ENCODE measurements at regions of chr12 and their contacts with region 1.

Region 1: DNA sequence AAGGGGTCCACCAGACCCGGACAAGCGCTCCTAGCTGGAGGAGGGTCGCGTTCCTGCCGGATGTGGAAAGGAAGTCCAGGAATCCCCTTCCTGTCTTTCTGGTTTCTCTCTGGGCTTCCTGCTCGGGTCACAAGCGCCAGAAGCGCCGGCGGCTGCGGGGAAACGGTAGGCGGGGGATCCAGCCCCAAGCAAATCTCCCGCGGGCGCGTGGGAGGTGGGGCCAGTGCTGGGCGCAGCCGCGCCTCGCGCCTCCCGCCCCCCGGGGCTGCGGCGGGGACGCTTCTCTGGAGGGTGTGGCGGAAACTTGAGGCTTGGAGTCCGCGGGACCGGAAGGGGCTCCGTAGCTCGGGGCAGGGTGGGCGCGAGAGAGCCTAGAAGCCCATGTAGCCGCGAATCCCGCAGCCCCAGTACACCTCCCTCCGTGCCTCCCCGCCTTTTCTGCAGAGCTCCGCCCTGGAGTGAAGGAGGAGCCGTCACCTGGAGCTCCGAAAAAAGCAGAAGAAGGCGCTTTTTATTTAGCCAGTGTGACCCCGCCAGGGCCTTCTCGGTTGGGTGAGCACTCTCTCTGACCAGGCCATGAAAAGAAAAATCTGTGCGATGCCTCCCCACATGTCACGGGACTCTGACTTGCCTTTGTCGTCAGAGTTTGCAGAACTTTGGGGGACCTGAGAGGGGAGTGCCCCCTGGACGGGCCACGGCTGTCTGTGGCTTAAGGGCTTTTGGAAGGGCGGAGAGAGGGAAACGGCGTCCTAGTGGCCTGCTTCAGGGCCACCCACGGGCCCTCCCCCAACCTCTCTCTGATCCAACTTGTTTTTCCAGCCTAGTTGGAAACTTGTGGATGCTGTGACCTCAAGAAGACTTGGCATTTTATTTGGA is 21.4 kb upstream of the CLEC2D start:
- DNase-seq: peak; percentile 77 to 97 (median 92)
- ATAC-seq: peak; percentile 81
- H3K4me3 ChIP-seq: peak overlapping the region; percentile 67
- H3K4me3 Mint-ChIP-seq: peak overlapping the region; percentile 93 to 100 (median 98)
- H3K27ac ChIP-seq: peak overlapping the region; percentile 92
- H3K27ac Mint-ChIP-seq: peak overlapping the region; percentile 92 to 100 (median 98)
- H3K4me1 ChIP-seq: peaks cover 29 to 42% of the 10 kb centered on the region in 2 donors
- H3K4me1 Mint-ChIP-seq: peaks cover 32 to 65% (median 60%) of the 10 kb centered on the region in 7 donors
- H3K27me3 ChIP-seq: no peaks in the 10 kb centered on the region
- H3K27me3 Mint-ChIP-seq: peaks cover 0 to 5% (median 0%) of the 10 kb centered on the region in 5 donors

Region 2: GRCh38 chr12:9634177-9634803 is 13.8 kb before region 1 on chr12:
- CTCF ChIA-PET with region 1: interaction called, 36 read pairs
- POLR2A ChIA-PET with region 1: interaction called, 119 read pairs
- intact Hi-C with region 1: loop called (anchors 1 kb)
- DNase-seq: peak; percentile 45 to 84 (median 75)
- ATAC-seq: peak; percentile 90
- H3K4me3 ChIP-seq: no peak overlapping the region
- H3K4me3 Mint-ChIP-seq: peak overlapping the region in 9 of 10 donors; percentile 15 to 78 (median 73)
- H3K27ac ChIP-seq: peak overlapping the region; percentile 40
- H3K27ac Mint-ChIP-seq: peak overlapping the region; percentile 78 to 97 (median 91)
- H3K4me1 ChIP-seq: peaks cover 23 to 33% of the 10 kb centered on the region in 2 donors
- H3K4me1 Mint-ChIP-seq: peaks cover 24 to 80% (median 66%) of the 10 kb centered on the region in 7 donors
- H3K27me3 ChIP-seq: no peaks in the 10 kb centered on the region
- H3K27me3 Mint-ChIP-seq: peaks cover 0 to 20% (median 0%) of the 10 kb centered on the region in 5 donors

Region 3: GRCh38 chr12:9673404-9674225 is 25.6 kb after region 1 on chr12:
- CTCF ChIA-PET with region 1: interaction called, 13 read pairs
- POLR2A ChIA-PET with region 1: interaction called, 784 read pairs
- intact Hi-C with region 1: loop called (anchors 1 kb)
- DNase-seq: peak in 7 of 9 donors; percentile 36 to 67 (median 45)
- ATAC-seq: peak; percentile 63
- H3K4me3 ChIP-seq: peak overlapping the region; percentile 80
- H3K4me3 Mint-ChIP-seq: peak overlapping the region; percentile 89 to 99 (median 92)
- H3K27ac ChIP-seq: peak overlapping the region; percentile 83
- H3K27ac Mint-ChIP-seq: peak overlapping the region; percentile 90 to 99 (median 95)
- H3K4me1 ChIP-seq: peaks cover 30 to 38% of the 10 kb centered on the region in 2 donors
- H3K4me1 Mint-ChIP-seq: peaks cover 42 to 80% (median 69%) of the 10 kb centered on the region in 7 donors
- H3K27me3 ChIP-seq: no peaks in the 10 kb centered on the region
- H3K27me3 Mint-ChIP-seq: peaks cover 0 to 8% (median 0%) of the 10 kb centered on the region in 5 donors

Region 4: DNA sequence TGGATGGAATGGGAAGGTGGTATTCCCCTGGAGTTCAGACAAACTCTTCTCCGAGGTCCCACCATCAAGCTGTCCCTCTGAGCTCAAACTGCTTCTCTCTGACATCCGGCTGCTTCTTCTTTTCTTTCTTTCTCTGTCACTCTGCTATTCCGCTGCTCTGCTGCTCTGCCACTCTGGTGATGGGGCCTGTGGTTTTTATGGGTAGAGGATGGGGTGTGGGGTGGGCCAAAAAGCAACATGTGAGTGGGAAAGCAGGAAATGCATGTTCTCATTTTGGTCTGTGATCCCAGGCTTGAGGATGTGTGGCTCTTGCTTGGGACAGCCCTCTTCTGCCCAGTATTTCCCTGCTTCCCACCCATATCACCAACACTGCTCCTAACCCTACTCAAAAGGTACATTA is 54.2 kb after region 1 on chr12:
- CTCF ChIA-PET with region 1: interaction called, 15 read pairs
- POLR2A ChIA-PET with region 1: interaction called, 104 read pairs
- intact Hi-C with region 1: loop called in 1 of 2 experiments (anchors 1 kb)
- DNase-seq: peak in 8 of 9 donors; percentile 44 to 78 (median 70)
- ATAC-seq: peak; percentile 79
- H3K4me3 ChIP-seq: peak overlapping the region; percentile 27
- H3K4me3 Mint-ChIP-seq: peak overlapping the region; percentile 65 to 85 (median 80)
- H3K27ac ChIP-seq: peak overlapping the region; percentile 61
- H3K27ac Mint-ChIP-seq: peak overlapping the region; percentile 83 to 97 (median 94)
- H3K4me1 ChIP-seq: peaks cover 36 to 42% of the 10 kb centered on the region in 2 donors
- H3K4me1 Mint-ChIP-seq: peaks cover 45 to 89% (median 85%) of the 10 kb centered on the region in 7 donors
- H3K27me3 ChIP-seq: no peaks in the 10 kb centered on the region
- H3K27me3 Mint-ChIP-seq: no peaks in the 10 kb centered on the region

Region 5: GRCh38 chr12:9760699-9761418 is 112.8 kb after region 1 on chr12 and contains the start of gene CD69:
- CTCF ChIA-PET with region 1: interaction called, 4 read pairs
- POLR2A ChIA-PET with region 1: interaction called, 60 read pairs
- intact Hi-C with region 1: loop called (anchors 1 kb)
- DNase-seq: peak; percentile 50 to 92 (median 85)
- ATAC-seq: peak; percentile 75
- H3K4me3 ChIP-seq: peak within 1 kb of the TSS; percentile 70
- H3K4me3 Mint-ChIP-seq: peak within 1 kb of the TSS; percentile 87 to 99 (median 97)
- H3K27ac ChIP-seq: peak within 1 kb of the TSS; percentile 98
- H3K27ac Mint-ChIP-seq: peak within 1 kb of the TSS; percentile 97 to 100 (median 100)
- H3K4me1 ChIP-seq: peaks cover 34 to 51% of the 10 kb centered on the region in 2 donors
- H3K4me1 Mint-ChIP-seq: peaks cover 31 to 65% (median 55%) of the 10 kb centered on the region in 7 donors
- H3K27me3 ChIP-seq: no peaks in the 10 kb centered on the region
- H3K27me3 Mint-ChIP-seq: no peaks in the 10 kb centered on the region
- total RNA-seq, gene CD69: 25.8 to 588 (median 125) TPM